Right cardiac atrium (tissue), 5 donors: ENCODE measurements at regions of chr1 and their contacts with region 1.

Region 1: GRCh38 chr1:56189946-56190792 is 389.2 kb downstream of the PLPP3 start:
- DNase-seq: no peak
- ATAC-seq: peak; percentile 36 to 41
- H3K4me3 ChIP-seq: no peak overlapping the region
- H3K27ac ChIP-seq: peak overlapping the region; percentile 18
- H3K4me1 ChIP-seq: peaks cover 3% of the 10 kb centered on the region
- H3K27me3 ChIP-seq: no peaks in the 10 kb centered on the region

Region 2: GRCh38 chr1:56284928-56285327 is 94.8 kb after region 1 on chr1:
- intact Hi-C with region 1: loop called in 1 of 4 experiments (anchors 10 kb)
- DNase-seq: no peak
- ATAC-seq: peak in 1 of 2 donors; percentile 43
- H3K4me3 ChIP-seq: no peak overlapping the region
- H3K27ac ChIP-seq: peak overlapping the region; percentile 37
- H3K4me1 ChIP-seq: peaks cover 6% of the 10 kb centered on the region
- H3K27me3 ChIP-seq: no peaks in the 10 kb centered on the region

Region 3: DNA sequence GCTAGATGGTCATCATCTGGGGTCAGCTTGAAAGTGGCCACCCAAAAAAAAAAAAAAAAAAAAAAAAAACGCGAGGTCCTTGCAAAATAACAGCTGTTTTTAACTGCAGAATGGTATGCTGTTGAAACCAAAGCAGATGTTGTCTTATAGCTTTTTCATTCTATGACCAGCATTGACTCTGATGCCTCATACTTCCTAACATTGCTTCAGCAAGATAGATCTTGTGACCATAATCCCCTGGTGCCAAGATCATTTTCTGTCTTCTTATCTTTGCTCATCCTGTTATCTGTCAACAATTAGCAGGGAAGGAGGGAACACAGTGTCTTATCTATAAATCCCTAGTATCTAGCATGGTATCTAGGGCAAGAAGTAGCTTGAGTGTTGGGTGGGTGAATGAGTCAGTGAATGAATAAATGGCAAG is 207.7 kb after region 1 on chr1:
- intact Hi-C with region 1: no loop called
- DNase-seq: no peak
- ATAC-seq: no peak
- H3K4me3 ChIP-seq: no peak overlapping the region
- H3K27ac ChIP-seq: no peak overlapping the region
- H3K4me1 ChIP-seq: peaks cover 2% of the 10 kb centered on the region
- H3K27me3 ChIP-seq: no peaks in the 10 kb centered on the region

Region 4: GRCh38 chr1:56411484-56412180 is 221.5 kb after region 1 on chr1:
- intact Hi-C with region 1: loop called in 1 of 4 experiments (anchors 10 kb)
- DNase-seq: peak; percentile 70 to 85 (median 73)
- ATAC-seq: peak; percentile 82 to 95
- H3K4me3 ChIP-seq: no peak overlapping the region
- H3K27ac ChIP-seq: peak overlapping the region; percentile 56
- H3K4me1 ChIP-seq: peaks cover 3% of the 10 kb centered on the region
- H3K27me3 ChIP-seq: no peaks in the 10 kb centered on the region